Activated B cell treated with CpG ODN at 0.5 μM for 24 hours (primary cell): ENCODE measurements at regions of chr1 and their contacts with region 1.

Region 1: GRCh38 chr1:110674337-110675059 is at the start of gene KCNA3:
- DNase-seq: peak; percentile 68
- ATAC-seq: peak; percentile 62
- H3K4me3 Mint-ChIP-seq: peak within 1 kb of the TSS; percentile 90
- H3K27ac Mint-ChIP-seq: peak within 1 kb of the TSS; percentile 80
- H3K4me1 Mint-ChIP-seq: peaks cover 60% of the 10 kb centered on the region
- H3K27me3 Mint-ChIP-seq: no peaks in the 10 kb centered on the region
- CTCF ChIP-seq: no peak
- total RNA-seq, gene KCNA3: 15.0 and 20.0 TPM in 2 replicates

Region 2: GRCh38 chr1:110524311-110525251 is 149.9 kb before region 1 on chr1:
- CTCF ChIA-PET with region 1: no interaction called
- POLR2A ChIA-PET with region 1: no interaction called
- intact Hi-C with region 1: no loop called
- DNase-seq: no peak
- ATAC-seq: no peak
- H3K4me3 Mint-ChIP-seq: no peak overlapping the region
- H3K27ac Mint-ChIP-seq: no peak overlapping the region
- H3K4me1 Mint-ChIP-seq: peaks cover 5% of the 10 kb centered on the region
- H3K27me3 Mint-ChIP-seq: peaks cover 34% of the 10 kb centered on the region
- CTCF ChIP-seq: no peak

Region 3: DNA sequence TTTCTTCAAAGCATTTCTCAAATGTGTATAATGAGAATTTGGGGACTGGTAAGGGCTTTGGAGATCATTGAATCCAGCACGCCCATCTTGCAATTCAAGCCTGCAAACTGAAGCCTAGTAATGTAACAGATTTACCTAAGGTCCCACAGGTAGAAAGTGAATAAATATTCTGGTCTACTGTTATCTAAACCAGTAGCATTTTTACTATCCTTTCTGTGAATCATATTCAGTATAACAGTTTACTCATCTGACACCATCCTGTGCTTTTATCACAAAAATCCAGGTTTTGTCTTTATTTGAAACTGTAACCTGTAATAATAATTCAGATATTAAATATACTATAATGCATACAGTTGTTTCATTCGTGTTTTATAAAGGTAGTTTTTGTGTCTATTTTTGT is 17.1 kb before region 1 on chr1:
- CTCF ChIA-PET with region 1: interaction called, 3 read pairs
- POLR2A ChIA-PET with region 1: no interaction called
- intact Hi-C with region 1: loop called (anchors 2 kb)
- DNase-seq: no peak
- ATAC-seq: no peak
- H3K4me3 Mint-ChIP-seq: no peak overlapping the region
- H3K27ac Mint-ChIP-seq: no peak overlapping the region
- H3K4me1 Mint-ChIP-seq: no peaks in the 10 kb centered on the region
- H3K27me3 Mint-ChIP-seq: no peaks in the 10 kb centered on the region
- CTCF ChIP-seq: no peak